ENCODE measurements at regions of chr10 and their contacts with region 1.

Region 1: GRCh38 chr10:110857265-110858158 is 14.2 kb upstream of the PDCD4 start:
- DNase-seq: peak; percentile 78
- ATAC-seq: peak; percentile 39
- H3K4me3 ChIP-seq: no peak overlapping the region
- H3K27ac ChIP-seq: peak overlapping the region; percentile 98
- H3K4me1 ChIP-seq: peaks cover 67% of the 10 kb centered on the region
- H3K27me3 ChIP-seq: no peaks in the 10 kb centered on the region
- CTCF ChIP-seq: no peak
- EP300 ChIP-seq: no peak
- POLR2A ChIP-seq: no peak
- RAD21 ChIP-seq: no peak

Region 2: DNA sequence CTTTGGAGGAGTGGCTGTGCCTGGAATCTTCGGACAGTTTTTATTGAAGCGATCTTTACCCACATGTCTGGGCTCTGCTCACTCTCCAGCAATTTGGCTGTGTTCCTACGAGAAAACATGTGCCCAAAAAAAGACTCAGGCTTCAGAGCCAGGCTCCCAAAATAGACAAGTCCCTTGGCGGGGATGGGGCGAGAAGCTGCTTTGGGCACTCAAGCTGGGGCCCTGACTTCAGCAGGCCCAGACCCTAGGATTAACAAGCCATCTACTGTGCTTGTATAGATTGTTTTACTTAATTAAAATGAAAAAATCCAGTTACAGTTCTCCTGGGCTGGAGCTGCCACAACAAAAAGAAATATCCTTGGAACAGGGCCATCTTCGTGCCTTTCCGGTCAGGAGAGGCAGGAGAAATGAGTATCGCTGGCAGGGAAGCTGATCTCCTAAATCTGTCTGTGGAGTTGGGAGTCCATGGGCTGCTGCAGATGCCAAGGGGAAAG is 37.1 kb before region 1 on chr10:
- CTCF ChIA-PET with region 1: interaction called, 3 read pairs
- POLR2A ChIA-PET with region 1: no interaction called
- RAD21 ChIA-PET with region 1: interaction called, 4 read pairs
- SMC1A ChIA-PET with region 1: interaction called, 11 read pairs
- in situ Hi-C with region 1: no loop called
- intact Hi-C with region 1: no loop called
- DNase-seq: no peak
- ATAC-seq: no peak
- H3K4me3 ChIP-seq: no peak overlapping the region
- H3K27ac ChIP-seq: no peak overlapping the region
- H3K4me1 ChIP-seq: peaks cover 27% of the 10 kb centered on the region
- H3K27me3 ChIP-seq: no peaks in the 10 kb centered on the region
- CTCF ChIP-seq: no peak
- EP300 ChIP-seq: no peak
- POLR2A ChIP-seq: no peak
- RAD21 ChIP-seq: no peak

Region 3: GRCh38 chr10:110834629-110835301 is 22.7 kb before region 1 on chr10:
- CTCF ChIA-PET with region 1: interaction called, 3 read pairs
- POLR2A ChIA-PET with region 1: interaction called, 12 read pairs
- RAD21 ChIA-PET with region 1: interaction called, 6 read pairs
- SMC1A ChIA-PET with region 1: interaction called, 12 read pairs
- in situ Hi-C with region 1: no loop called
- intact Hi-C with region 1: no loop called
- DNase-seq: no peak
- ATAC-seq: no peak
- H3K4me3 ChIP-seq: no peak overlapping the region
- H3K27ac ChIP-seq: no peak overlapping the region
- H3K4me1 ChIP-seq: no peaks in the 10 kb centered on the region
- H3K27me3 ChIP-seq: no peaks in the 10 kb centered on the region
- CTCF ChIP-seq: no peak
- EP300 ChIP-seq: no peak
- POLR2A ChIP-seq: no peak
- RAD21 ChIP-seq: no peak

Region 4: DNA sequence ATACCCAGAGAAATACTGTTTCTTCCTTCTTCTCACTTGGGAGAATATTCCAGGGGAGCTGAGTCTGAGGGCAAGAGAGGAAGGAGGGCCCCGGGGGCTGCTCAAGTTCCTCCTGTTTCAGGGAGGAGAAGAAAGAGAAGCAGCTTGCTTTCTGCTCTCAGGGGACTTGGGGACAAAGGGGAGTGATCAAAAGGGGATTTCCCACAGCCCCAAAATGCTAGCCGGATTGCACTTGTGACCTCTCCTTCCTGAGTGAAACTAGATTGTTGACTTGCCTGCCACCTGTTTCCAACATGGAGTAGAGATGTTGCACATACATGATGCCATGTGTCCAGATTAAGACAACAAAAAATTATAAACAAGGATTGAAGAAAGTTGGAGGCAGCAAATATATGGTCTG is 14.5 kb before region 1 on chr10:
- CTCF ChIA-PET with region 1: interaction called, 68 read pairs
- POLR2A ChIA-PET with region 1: interaction called, 145 read pairs
- RAD21 ChIA-PET with region 1: interaction called, 135 read pairs
- SMC1A ChIA-PET with region 1: interaction called, 188 read pairs
- in situ Hi-C with region 1: no loop called
- intact Hi-C with region 1: no loop called
- DNase-seq: peak; percentile 98
- ATAC-seq: peak; percentile 74
- H3K4me3 ChIP-seq: peak overlapping the region; percentile 68
- H3K27ac ChIP-seq: peak overlapping the region; percentile 97
- H3K4me1 ChIP-seq: peaks cover 53% of the 10 kb centered on the region
- H3K27me3 ChIP-seq: no peaks in the 10 kb centered on the region
- CTCF ChIP-seq: no peak
- EP300 ChIP-seq: peak; percentile 53 to 91; a peak in 3 of 4 replicates
- POLR2A ChIP-seq: no peak; the same call in 1 of the 2 replicates
- RAD21 ChIP-seq: peak; percentile 37; the same call in 1 of the 2 replicates

Region 5: DNA sequence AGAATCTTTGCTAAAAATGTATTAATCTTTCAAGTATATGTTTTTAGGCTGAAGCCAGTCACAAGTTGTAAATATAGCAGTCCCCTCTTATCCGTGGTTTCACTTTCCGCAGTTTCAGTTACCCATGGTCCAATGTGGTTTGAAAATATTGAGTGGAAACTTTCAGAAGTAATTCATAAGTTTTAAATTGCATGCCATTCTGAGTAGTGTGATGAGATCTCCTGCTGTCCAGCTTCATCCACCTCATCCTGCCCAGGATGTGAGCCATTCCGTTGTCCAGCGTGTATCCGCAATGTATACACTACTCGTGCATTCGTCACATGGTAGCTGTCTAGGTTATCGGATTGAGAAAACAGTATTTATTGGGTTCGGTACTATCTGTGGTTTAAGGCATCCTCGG is 26.4 kb after region 1 on chr10:
- CTCF ChIA-PET with region 1: interaction called, 3 read pairs
- POLR2A ChIA-PET with region 1: interaction called, 3 read pairs
- RAD21 ChIA-PET with region 1: interaction called, 6 read pairs
- SMC1A ChIA-PET with region 1: interaction called, 22 read pairs
- in situ Hi-C with region 1: no loop called
- intact Hi-C with region 1: no loop called
- DNase-seq: no peak
- ATAC-seq: peak; percentile 5; the same call in 2 of the 3 replicates
- H3K4me3 ChIP-seq: no peak overlapping the region; the same call in 1 of the 2 replicates
- H3K27ac ChIP-seq: no peak overlapping the region
- H3K4me1 ChIP-seq: peaks cover 6% of the 10 kb centered on the region
- H3K27me3 ChIP-seq: no peaks in the 10 kb centered on the region
- CTCF ChIP-seq: no peak
- EP300 ChIP-seq: no peak
- POLR2A ChIP-seq: no peak
- RAD21 ChIP-seq: no peak

Region 6: GRCh38 chr10:110893559-110894179 is 36.2 kb after region 1 on chr10:
- CTCF ChIA-PET with region 1: interaction called, 5 read pairs
- POLR2A ChIA-PET with region 1: interaction called, 3 read pairs
- RAD21 ChIA-PET with region 1: interaction called, 6 read pairs
- SMC1A ChIA-PET with region 1: interaction called, 15 read pairs
- in situ Hi-C with region 1: no loop called
- intact Hi-C with region 1: no loop called
- DNase-seq: no peak
- ATAC-seq: peak; percentile 93
- H3K4me3 ChIP-seq: no peak overlapping the region
- H3K27ac ChIP-seq: no peak overlapping the region
- H3K4me1 ChIP-seq: no peaks in the 10 kb centered on the region
- H3K27me3 ChIP-seq: no peaks in the 10 kb centered on the region
- CTCF ChIP-seq: peak; percentile 34 to 52 (median 44); a peak in 4 of 6 replicates
- EP300 ChIP-seq: no peak
- POLR2A ChIP-seq: no peak
- RAD21 ChIP-seq: peak; percentile 66

Region 7: DNA sequence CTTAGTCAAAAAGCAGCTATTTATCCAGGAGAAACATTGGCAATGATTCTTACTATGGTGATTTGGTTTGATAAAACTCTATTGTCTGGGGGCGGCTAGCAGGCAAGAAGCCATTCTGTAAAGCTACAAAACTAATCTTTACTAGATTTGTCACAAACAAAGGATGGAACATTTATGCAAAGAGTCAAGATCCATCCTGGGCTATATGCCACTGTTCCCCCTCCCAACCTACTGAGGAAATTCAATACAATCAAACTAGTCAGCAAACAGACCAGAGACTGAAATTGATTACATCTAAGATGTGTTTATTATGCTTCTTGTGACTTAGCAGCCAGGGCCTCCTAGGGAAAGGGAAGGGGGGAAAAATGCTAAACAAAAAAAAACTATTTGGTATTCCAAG is 928.4 kb after region 1 on chr10:
- CTCF ChIA-PET with region 1: no interaction called
- POLR2A ChIA-PET with region 1: no interaction called
- RAD21 ChIA-PET with region 1: no interaction called
- SMC1A ChIA-PET with region 1: no interaction called
- in situ Hi-C with region 1: no loop called
- intact Hi-C with region 1: no loop called
- DNase-seq: no peak
- ATAC-seq: no peak
- H3K4me3 ChIP-seq: no peak overlapping the region
- H3K27ac ChIP-seq: no peak overlapping the region
- H3K4me1 ChIP-seq: no peaks in the 10 kb centered on the region
- H3K27me3 ChIP-seq: no peaks in the 10 kb centered on the region
- CTCF ChIP-seq: no peak
- EP300 ChIP-seq: no peak
- POLR2A ChIP-seq: no peak
- RAD21 ChIP-seq: no peak

Measured in GM12878 (cell line).